ENCODE measurements at regions of chr6 and their contacts with region 1.

Region 1: GRCh38 chr6:38493931-38494547 is 145.7 kb downstream of the BTBD9 start:
- DNase-seq: peak; percentile 54
- ATAC-seq: peak; percentile 40
- H3K4me3 Mint-ChIP-seq: no peak overlapping the region
- H3K27ac Mint-ChIP-seq: no peak overlapping the region
- H3K4me1 Mint-ChIP-seq: peaks cover 6% of the 10 kb centered on the region
- H3K27me3 Mint-ChIP-seq: no peaks in the 10 kb centered on the region
- CTCF ChIP-seq: peak; percentile 98

Region 2: GRCh38 chr6:37483917-37484785 is 1009.9 kb before region 1 on chr6:
- CTCF ChIA-PET with region 1: no interaction called
- POLR2A ChIA-PET with region 1: no interaction called
- intact Hi-C with region 1: loop called (anchors 1 kb)
- DNase-seq: peak; percentile 72
- ATAC-seq: peak; percentile 97
- H3K4me3 Mint-ChIP-seq: no peak overlapping the region
- H3K27ac Mint-ChIP-seq: no peak overlapping the region
- H3K4me1 Mint-ChIP-seq: peaks cover 3% of the 10 kb centered on the region
- H3K27me3 Mint-ChIP-seq: no peaks in the 10 kb centered on the region
- CTCF ChIP-seq: no peak

Region 3: DNA sequence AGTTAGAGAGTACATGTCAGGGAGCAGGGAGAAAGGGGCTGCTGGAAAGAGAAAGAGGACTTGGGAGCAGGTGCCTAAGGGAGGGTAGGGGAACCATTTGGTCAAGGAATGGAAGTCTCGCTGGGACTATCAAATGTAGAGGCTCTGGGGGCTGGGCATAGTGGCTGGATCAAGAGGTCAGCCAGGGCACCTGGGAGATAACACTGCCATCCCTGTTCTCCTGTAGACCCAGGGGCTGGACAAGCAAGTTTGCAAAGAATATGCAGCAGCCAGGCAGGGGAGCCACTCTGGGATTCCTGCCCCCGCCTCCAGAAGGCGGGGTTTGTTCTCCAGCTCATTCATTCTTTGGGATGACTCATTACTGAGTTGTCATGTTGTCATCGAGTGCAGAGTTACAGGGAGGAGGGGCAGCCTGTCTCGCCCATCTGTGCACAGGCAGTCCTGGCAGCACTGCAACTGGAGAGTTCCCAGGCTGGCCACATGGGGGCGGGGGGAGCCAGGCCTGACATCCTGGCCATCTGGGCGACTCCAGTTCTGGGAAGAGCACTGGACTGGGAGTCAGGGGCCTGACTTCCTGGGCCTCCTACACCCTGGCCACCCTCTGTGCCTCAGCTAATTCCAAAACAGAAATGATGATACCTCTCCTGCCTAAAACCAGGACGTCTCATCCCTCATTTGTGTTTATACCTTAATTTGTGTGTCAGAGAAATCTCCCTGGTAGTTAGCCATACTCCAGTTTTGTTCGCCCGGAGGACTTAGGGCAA is 702.7 kb before region 1 on chr6:
- CTCF ChIA-PET with region 1: interaction called, 12 read pairs
- POLR2A ChIA-PET with region 1: no interaction called
- intact Hi-C with region 1: loop called (anchors 1 kb)
- DNase-seq: peak; percentile 66
- ATAC-seq: peak; percentile 100
- H3K4me3 Mint-ChIP-seq: no peak overlapping the region
- H3K27ac Mint-ChIP-seq: no peak overlapping the region
- H3K4me1 Mint-ChIP-seq: peaks cover 7% of the 10 kb centered on the region
- H3K27me3 Mint-ChIP-seq: no peaks in the 10 kb centered on the region
- CTCF ChIP-seq: peak; percentile 73

Region 4: GRCh38 chr6:38476141-38476540 is 17.9 kb before region 1 on chr6:
- CTCF ChIA-PET with region 1: interaction called, 11 read pairs
- POLR2A ChIA-PET with region 1: no interaction called
- intact Hi-C with region 1: no loop called
- DNase-seq: no peak
- ATAC-seq: no peak
- H3K4me3 Mint-ChIP-seq: no peak overlapping the region
- H3K27ac Mint-ChIP-seq: no peak overlapping the region
- H3K4me1 Mint-ChIP-seq: peaks cover 2% of the 10 kb centered on the region
- H3K27me3 Mint-ChIP-seq: no peaks in the 10 kb centered on the region
- CTCF ChIP-seq: no peak